ENCODE measurements at regions of chr1 and their contacts with region 1.

Region 1: DNA sequence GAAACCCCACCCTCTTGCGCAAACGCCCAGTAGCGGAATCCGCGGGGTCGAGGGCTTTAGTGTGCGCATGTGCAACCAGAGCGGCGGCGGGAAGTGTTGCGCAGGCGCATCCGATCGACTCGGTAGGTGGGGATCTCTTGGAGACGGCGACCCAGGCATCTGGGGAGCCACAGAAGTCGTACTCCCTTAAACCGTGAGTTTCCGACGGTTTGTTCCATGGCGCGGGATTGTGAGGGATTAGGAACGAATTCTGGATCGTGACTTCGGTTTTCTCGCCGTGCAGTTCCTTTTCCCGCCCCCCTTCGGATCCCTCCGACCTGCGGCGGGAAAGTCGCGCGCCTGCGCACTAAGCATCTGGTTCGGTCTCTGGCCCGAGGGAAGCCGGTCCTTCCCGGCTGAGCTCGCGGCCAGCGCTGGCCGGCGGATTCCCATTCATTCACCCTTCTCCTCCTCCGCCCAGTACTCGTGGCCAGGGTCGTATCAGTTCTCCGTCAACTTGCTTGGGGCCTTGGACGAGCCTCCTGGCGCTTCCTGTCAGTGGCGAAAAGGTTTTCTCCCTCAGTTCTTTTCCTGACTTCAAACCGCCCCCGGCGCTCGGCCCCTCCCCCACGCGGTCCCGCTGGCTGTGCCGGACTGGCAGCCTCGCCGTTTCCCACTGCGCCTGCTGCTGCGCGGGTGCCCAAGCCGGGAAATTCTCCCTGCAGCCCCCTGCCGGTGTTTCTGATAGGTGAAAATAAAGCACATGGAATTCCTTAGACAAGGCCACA is at the start of gene CDC7:
- DNase-seq: peak; percentile 77
- ATAC-seq: peak; percentile 82
- H3K4me3 ChIP-seq: peak within 1 kb of the TSS; percentile 92
- H3K27ac ChIP-seq: peak within 1 kb of the TSS; percentile 96
- H3K4me1 ChIP-seq: peaks cover 2% of the 10 kb centered on the region; the same call in 1 of the 2 replicates
- H3K27me3 ChIP-seq: no peaks in the 10 kb centered on the region
- CTCF ChIP-seq: peak in 1 of 3 experiments; percentile 14; a peak in 2 of 6 replicates
- EP300 ChIP-seq: no peak
- POLR2A ChIP-seq: peak; percentile 81
- RAD21 ChIP-seq: no peak
- polyA plus RNA-seq, gene CDC7: 14.9 to 20.5 TPM

Region 2: GRCh38 chr1:91404151-91405012 is 96.6 kb before region 1 on chr1 and contains the start of gene HFM1:
- CTCF ChIA-PET with region 1: interaction called, 3 read pairs
- POLR2A ChIA-PET with region 1: no interaction called
- RAD21 ChIA-PET with region 1: interaction called, 3 read pairs
- SMC1A ChIA-PET with region 1: no interaction called
- in situ Hi-C with region 1: no loop called
- intact Hi-C with region 1: loop called (anchors 1 kb)
- DNase-seq: no peak
- ATAC-seq: peak; percentile 97
- H3K4me3 ChIP-seq: peak within 1 kb of the TSS; percentile 60
- H3K27ac ChIP-seq: no peak within 1 kb of the TSS
- H3K4me1 ChIP-seq: no peaks in the 10 kb centered on the region
- H3K27me3 ChIP-seq: peaks cover 0 to 10% of the 10 kb centered on the region in 2 experiments; a peak in 3 of 4 replicates
- CTCF ChIP-seq: no peak
- EP300 ChIP-seq: no peak
- POLR2A ChIP-seq: no peak
- RAD21 ChIP-seq: no peak
- polyA plus RNA-seq, gene HFM1: not detected

Region 3: GRCh38 chr1:91712981-91713841 is 212.3 kb after region 1 on chr1:
- CTCF ChIA-PET with region 1: interaction called, 3 read pairs
- POLR2A ChIA-PET with region 1: no interaction called
- RAD21 ChIA-PET with region 1: no interaction called
- SMC1A ChIA-PET with region 1: interaction called, 3 read pairs
- in situ Hi-C with region 1: no loop called
- intact Hi-C with region 1: loop called (anchors 5 kb)
- DNase-seq: peak; percentile 55
- ATAC-seq: peak; percentile 89
- H3K4me3 ChIP-seq: peak overlapping the region; percentile 12; the same call in 1 of the 2 replicates
- H3K27ac ChIP-seq: peak overlapping the region; percentile 66
- H3K4me1 ChIP-seq: peaks cover 36% of the 10 kb centered on the region
- H3K27me3 ChIP-seq: no peaks in the 10 kb centered on the region
- CTCF ChIP-seq: no peak
- EP300 ChIP-seq: peak; percentile 49 to 65; a peak in 3 of 4 replicates
- POLR2A ChIP-seq: peak; percentile 60
- RAD21 ChIP-seq: 0 out of 2 replicates have a peak, but pooled peaks have one; percentile 0

Region 4: GRCh38 chr1:91885716-91886506 is 385.0 kb after region 1 on chr1 and contains the start of gene TGFBR3:
- CTCF ChIA-PET with region 1: interaction called, 4 read pairs
- POLR2A ChIA-PET with region 1: no interaction called
- RAD21 ChIA-PET with region 1: interaction called, 3 read pairs
- SMC1A ChIA-PET with region 1: interaction called, 3 read pairs
- in situ Hi-C with region 1: loop called (anchors 25 kb)
- intact Hi-C with region 1: loop called (anchors 5 kb)
- DNase-seq: no peak
- ATAC-seq: peak; percentile 87
- H3K4me3 ChIP-seq: peak within 1 kb of the TSS; percentile 85
- H3K27ac ChIP-seq: peak within 1 kb of the TSS; percentile 41
- H3K4me1 ChIP-seq: no peaks in the 10 kb centered on the region; the same call in 1 of the 2 replicates
- H3K27me3 ChIP-seq: peaks cover 0 to 5% of the 10 kb centered on the region in 2 experiments; a peak in 2 of 4 replicates
- CTCF ChIP-seq: peak; percentile 10 to 35 (median 34); a peak in 4 of 6 replicates
- EP300 ChIP-seq: no peak
- POLR2A ChIP-seq: peak; percentile 75
- RAD21 ChIP-seq: 0 out of 2 replicates have a peak, but pooled peaks have one; percentile 24
- polyA plus RNA-seq, gene TGFBR3: 2.7 to 3.1 TPM

Region 5: DNA sequence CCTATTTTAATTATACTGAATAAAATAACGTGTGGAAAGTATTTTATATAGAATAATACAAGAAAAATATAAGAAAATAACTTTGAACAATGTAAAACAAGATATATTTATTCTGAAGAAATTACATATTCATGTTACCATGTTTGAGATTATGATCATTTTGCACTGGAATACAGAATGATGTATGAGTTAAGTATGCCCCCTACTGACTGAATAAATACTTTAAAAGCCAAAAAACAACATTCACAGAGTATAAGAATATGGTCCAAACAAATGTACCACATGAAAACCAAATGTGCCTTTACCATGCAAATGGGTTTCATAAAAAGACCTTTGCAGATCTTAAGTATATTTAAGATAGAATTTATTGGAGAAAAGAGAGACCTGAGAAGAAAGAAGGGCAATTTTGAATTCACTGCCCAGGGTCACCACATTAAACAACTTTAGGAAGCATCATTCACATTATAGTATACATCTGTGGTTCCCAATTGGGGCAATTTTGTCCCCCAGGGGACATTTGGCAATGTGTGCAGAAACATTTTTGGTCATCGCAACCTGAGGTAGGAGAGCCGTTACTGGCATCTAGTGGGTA is 1122.3 kb after region 1 on chr1:
- CTCF ChIA-PET with region 1: no interaction called
- POLR2A ChIA-PET with region 1: no interaction called
- RAD21 ChIA-PET with region 1: no interaction called
- SMC1A ChIA-PET with region 1: no interaction called
- in situ Hi-C with region 1: loop called (anchors 25 kb)
- intact Hi-C with region 1: no loop called
- DNase-seq: no peak
- ATAC-seq: peak; percentile 81
- H3K4me3 ChIP-seq: no peak overlapping the region
- H3K27ac ChIP-seq: no peak overlapping the region
- H3K4me1 ChIP-seq: no peaks in the 10 kb centered on the region
- H3K27me3 ChIP-seq: no peaks in the 10 kb centered on the region
- CTCF ChIP-seq: peak in 2 of 3 experiments; percentile 16 to 34; a peak in 4 of 6 replicates
- EP300 ChIP-seq: no peak
- POLR2A ChIP-seq: no peak
- RAD21 ChIP-seq: peak; percentile 74